Activated CD4-positive, alpha-beta T cell treated with anti-CD3 and anti-CD28 coated beads, Interleukin-2, amount 10 ng/mL, durations not matched to agents 24 days and 14 days (primary cell): ENCODE measurements at regions of chr6 and their contacts with region 1.

Region 1: GRCh38 chr6:43516697-43517504 is at the starts of genes POLR1C and YIPF3:
- DNase-seq: peak; percentile 99
- H3K4me3 Mint-ChIP-seq: no peak within 1 kb of the TSS
- H3K27ac Mint-ChIP-seq: no peak within 1 kb of the TSS
- H3K4me1 Mint-ChIP-seq: peaks cover 19% of the 10 kb centered on the region
- H3K27me3 Mint-ChIP-seq: no peaks in the 10 kb centered on the region
- total RNA-seq, gene POLR1C: 91.7 TPM in 2 replicates
- total RNA-seq, gene YIPF3: 47.7 and 52.1 TPM in 2 replicates

Region 2: DNA sequence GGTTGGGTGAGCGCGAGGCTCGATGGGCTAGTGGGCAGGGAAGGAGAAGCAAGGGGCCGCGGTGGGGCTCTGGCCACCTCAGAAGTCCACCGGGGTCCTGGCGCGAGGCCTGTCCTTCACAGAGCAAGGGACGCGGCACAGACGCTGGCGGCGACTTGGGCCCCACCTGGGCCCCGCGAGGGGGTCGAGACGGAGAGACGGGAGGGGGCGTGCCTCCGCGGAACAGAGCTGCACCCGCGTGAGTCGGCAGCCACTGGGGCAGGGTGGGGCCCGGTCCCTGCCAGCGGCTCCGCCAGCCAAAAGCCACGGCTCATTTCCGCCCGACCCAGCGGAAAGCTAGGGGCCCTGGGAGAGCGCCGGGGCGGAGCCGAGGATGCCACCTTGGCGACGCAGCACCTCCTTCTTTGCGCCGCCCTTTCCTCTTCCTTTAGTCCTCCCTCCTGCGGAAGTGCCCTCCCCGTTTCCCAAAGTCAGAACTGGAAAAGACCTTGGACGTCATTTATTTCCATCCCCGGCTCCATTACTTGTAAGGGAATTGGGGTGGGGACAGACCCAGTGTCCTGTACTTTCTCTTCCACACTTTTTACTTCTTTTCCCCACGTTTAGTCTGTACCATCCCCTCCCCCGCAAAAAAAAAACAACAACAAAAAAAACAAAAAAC is 463.2 kb before region 1 on chr6 and contains the start of gene CUL7:
- intact Hi-C with region 1: loop called (anchors 5 kb)
- DNase-seq: peak; percentile 98
- H3K4me3 Mint-ChIP-seq: peak within 1 kb of the TSS; percentile 96
- H3K27ac Mint-ChIP-seq: peak within 1 kb of the TSS; percentile 98
- H3K4me1 Mint-ChIP-seq: peaks cover 43% of the 10 kb centered on the region
- H3K27me3 Mint-ChIP-seq: no peaks in the 10 kb centered on the region
- total RNA-seq, gene CUL7: 22.6 and 24.7 TPM in 2 replicates

Region 3: DNA sequence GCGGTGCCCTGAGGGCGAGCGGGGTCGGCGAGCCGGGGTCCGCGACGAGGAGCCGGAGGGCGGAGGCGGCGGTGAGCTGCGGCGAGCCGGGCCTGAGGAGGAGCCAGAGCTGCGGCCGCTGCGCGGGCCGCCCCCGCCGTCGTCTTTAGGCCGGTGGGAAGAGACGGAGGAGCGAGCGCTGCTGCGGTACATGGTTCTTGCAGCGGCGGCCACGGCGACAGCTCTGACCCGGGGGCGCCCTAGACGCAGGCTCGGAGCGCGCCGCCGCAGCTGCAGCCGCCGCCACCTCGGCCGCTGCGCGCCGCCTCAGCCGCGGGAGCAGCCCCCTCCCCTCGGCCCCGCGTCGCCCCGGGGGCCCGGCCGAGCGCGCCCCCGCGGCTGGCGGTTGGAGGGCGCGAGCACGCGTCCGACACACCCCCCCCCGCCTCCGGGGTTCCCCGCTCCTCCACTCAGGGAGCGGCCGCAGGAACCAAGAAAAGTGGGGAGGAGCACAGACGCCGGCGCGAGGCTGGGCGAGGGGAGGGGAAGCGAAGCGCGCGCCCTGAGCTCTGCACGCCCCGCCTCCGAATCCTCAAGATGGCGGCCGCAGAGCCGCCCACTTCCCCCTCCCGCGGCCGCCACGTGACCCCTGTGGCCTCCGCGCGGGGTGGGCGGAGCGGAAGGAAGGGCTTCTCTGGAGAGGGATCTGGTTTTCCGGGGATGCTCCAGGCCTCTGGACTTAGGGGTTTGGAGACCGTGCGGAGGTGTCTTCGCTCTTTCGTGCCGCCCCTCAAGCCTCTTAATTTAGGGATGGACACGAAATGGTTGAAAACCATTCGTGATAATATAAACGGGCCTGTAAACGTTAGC is 147.5 kb before region 1 on chr6 and contains the start of gene ZNF318:
- intact Hi-C with region 1: loop called (anchors 5 kb)
- DNase-seq: peak; percentile 98
- H3K4me3 Mint-ChIP-seq: peak within 1 kb of the TSS; percentile 85
- H3K27ac Mint-ChIP-seq: peak within 1 kb of the TSS; percentile 94
- H3K4me1 Mint-ChIP-seq: peaks cover 35% of the 10 kb centered on the region
- H3K27me3 Mint-ChIP-seq: peaks cover 1% of the 10 kb centered on the region
- total RNA-seq, gene ZNF318: 9.3 and 10.3 TPM in 2 replicates

Region 4: DNA sequence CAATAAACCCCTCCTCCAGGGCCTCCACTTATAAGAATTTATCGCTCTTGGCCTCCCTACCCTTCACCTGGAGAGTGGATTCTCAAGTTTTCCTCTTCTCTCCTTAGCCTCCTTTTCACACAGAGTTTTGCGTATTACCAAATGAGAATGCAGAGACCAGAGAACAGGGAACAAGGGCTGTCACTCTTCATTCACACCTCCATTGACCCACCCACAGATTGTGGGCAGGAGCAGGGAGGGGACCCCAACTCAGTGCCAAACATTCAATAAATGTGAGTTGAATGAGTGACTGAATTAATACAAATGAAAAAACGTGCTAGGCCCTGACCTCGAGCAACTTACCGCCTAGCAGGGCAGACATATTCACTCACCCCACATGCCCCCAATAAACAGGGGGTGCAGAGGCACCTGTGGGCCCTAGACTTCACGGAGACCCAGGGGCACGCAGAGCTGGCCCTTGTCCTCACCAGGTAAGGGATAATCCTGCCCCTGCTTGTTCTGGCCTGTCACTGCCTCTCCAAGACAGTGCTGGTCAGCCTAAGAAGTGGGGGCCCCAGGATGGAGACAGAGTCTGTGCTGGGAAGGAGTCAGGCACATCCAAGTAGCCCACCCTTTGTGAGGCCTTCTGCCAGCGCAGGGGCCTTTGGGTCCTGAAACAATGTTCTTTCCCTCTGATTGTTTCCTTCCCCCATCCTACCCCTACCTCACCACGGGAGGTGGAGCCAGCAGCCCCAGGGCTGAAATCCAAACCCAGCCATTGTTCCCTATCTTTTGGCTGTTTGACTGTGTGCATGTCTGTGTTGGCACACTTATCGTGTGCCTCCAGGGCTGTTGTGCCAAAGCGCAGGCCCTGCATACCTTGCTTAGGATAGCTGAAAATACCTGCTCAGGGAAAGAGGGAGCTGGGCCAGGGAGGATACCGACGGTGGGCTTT is 47.9 kb before region 1 on chr6:
- intact Hi-C with region 1: no loop called
- DNase-seq: no peak
- H3K4me3 Mint-ChIP-seq: no peak overlapping the region
- H3K27ac Mint-ChIP-seq: no peak overlapping the region
- H3K4me1 Mint-ChIP-seq: no peaks in the 10 kb centered on the region
- H3K27me3 Mint-ChIP-seq: peaks cover 23% of the 10 kb centered on the region

Region 5: GRCh38 chr6:43575772-43576551 is 59.1 kb after region 1 on chr6 and contains the starts of genes POLH and XPO5:
- intact Hi-C with region 1: loop called (anchors 2 kb)
- DNase-seq: peak; percentile 98
- H3K4me3 Mint-ChIP-seq: peak within 1 kb of the TSS; percentile 95
- H3K27ac Mint-ChIP-seq: peak within 1 kb of the TSS; percentile 90
- H3K4me1 Mint-ChIP-seq: peaks cover 46% of the 10 kb centered on the region
- H3K27me3 Mint-ChIP-seq: no peaks in the 10 kb centered on the region
- total RNA-seq, gene POLH: 34.2 and 37.9 TPM in 2 replicates
- total RNA-seq, gene XPO5: 143 and 145 TPM in 2 replicates

Region 6: DNA sequence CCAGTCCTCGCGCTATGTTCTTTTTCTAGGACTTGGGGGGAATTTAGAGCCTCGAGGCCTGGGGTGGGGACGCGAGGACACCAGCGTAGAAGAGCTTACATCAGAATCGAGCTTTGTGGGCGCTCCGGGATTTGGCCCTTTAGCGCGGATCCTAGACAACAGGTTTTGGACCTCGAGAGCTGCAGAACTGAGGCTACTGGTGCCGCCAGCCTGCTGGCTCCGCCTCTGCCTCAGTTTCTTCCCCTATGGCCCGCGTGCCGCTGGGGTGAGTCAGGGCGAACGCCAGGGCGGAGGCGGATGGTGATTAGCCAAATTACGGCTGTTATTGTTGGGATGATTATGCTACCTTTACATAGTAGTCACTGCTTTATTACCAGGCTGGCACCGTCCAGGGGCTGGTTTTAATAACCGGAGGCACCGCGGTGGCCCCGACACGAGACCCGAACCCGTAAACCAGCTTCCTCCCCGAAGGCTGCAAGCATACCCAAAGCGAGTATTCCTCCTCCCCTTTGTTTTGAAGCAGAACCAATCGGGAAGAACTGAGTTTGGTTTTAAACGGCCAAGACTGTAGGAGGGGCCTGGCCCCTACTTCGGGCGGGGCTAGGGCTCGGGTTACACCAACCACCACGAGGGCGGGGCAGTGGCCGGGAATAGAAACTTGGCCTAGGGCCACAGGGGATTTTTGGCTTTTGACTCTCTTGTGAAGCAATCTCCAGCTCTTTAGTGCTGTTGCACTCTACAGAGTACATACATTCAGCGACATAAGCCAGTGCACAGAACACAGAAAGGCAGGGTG is 112.8 kb after region 1 on chr6:
- intact Hi-C with region 1: loop called (anchors 1 kb)
- DNase-seq: peak; percentile 98
- H3K4me3 Mint-ChIP-seq: peak overlapping the region; percentile 99
- H3K27ac Mint-ChIP-seq: peak overlapping the region; percentile 99
- H3K4me1 Mint-ChIP-seq: peaks cover 38% of the 10 kb centered on the region
- H3K27me3 Mint-ChIP-seq: no peaks in the 10 kb centered on the region

Region 7: GRCh38 chr6:43698584-43699349 is 181.9 kb after region 1 on chr6:
- intact Hi-C with region 1: no loop called
- DNase-seq: no peak
- H3K4me3 Mint-ChIP-seq: no peak overlapping the region
- H3K27ac Mint-ChIP-seq: no peak overlapping the region
- H3K4me1 Mint-ChIP-seq: no peaks in the 10 kb centered on the region
- H3K27me3 Mint-ChIP-seq: peaks cover 25% of the 10 kb centered on the region